GM12878 (cell line): ENCODE measurements at regions of chr6 and their contacts with region 1.

Region 1: GRCh38 chr6:170295510-170296422 is 4.9 kb upstream of the DLL1 start:
- DNase-seq: no peak
- ATAC-seq: peak; percentile 55
- H3K4me3 ChIP-seq: peak overlapping the region; percentile 57; the same call in 1 of the 2 replicates
- H3K27ac ChIP-seq: no peak overlapping the region
- H3K4me1 ChIP-seq: peaks cover 23% of the 10 kb centered on the region
- H3K27me3 ChIP-seq: peaks cover 14 to 33% of the 10 kb centered on the region in 2 experiments
- CTCF ChIP-seq: no peak
- EP300 ChIP-seq: no peak
- POLR2A ChIP-seq: no peak
- RAD21 ChIP-seq: no peak

Region 2: GRCh38 chr6:169831450-169832246 is 464.1 kb before region 1 on chr6:
- CTCF ChIA-PET with region 1: interaction called, 5 read pairs
- POLR2A ChIA-PET with region 1: no interaction called
- RAD21 ChIA-PET with region 1: interaction called, 11 read pairs
- SMC1A ChIA-PET with region 1: interaction called, 7 read pairs
- in situ Hi-C with region 1: no loop called
- intact Hi-C with region 1: loop called (anchors 10 kb)
- DNase-seq: no peak
- ATAC-seq: peak; percentile 95
- H3K4me3 ChIP-seq: no peak overlapping the region
- H3K27ac ChIP-seq: no peak overlapping the region
- H3K4me1 ChIP-seq: no peaks in the 10 kb centered on the region
- H3K27me3 ChIP-seq: no peaks in the 10 kb centered on the region
- CTCF ChIP-seq: peak; percentile 79 to 84 (median 80)
- EP300 ChIP-seq: no peak
- POLR2A ChIP-seq: no peak
- RAD21 ChIP-seq: peak; percentile 75

Region 3: DNA sequence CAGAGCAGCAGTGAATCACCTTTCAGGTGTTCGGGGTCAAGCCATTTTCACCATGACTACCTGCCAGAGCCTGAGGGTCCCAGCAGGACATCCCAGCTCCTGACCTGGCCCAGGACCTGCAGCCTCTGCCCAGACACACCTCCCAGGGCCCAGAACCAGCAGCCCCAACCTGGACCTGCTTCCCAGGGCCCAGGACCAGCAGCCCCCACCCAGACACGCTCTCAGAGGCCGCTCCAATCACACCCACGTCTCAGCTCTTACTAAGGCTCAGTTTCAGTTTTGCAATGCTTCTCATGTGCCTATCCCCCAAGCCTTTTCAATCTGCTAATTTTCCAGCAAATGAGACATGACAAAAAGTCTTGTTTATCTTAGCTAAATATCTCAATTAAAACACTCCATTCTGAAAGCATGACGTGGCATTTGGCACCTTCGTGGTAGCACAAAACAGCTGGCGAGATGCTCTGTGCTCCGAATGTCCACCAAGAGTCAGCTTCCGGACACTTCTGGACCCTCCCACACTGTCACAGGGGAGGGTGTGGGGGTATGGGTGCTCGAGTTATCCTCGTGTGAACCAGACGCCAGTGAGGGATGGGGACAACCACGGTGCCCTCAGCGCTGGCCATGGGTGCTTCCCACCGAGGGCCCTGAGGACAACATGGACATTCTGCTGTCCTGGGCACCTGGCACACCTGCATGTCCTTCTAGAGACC is 258.1 kb before region 1 on chr6:
- CTCF ChIA-PET with region 1: no interaction called
- POLR2A ChIA-PET with region 1: no interaction called
- RAD21 ChIA-PET with region 1: no interaction called
- SMC1A ChIA-PET with region 1: no interaction called
- in situ Hi-C with region 1: no loop called
- intact Hi-C with region 1: no loop called
- DNase-seq: no peak
- ATAC-seq: no peak
- H3K4me3 ChIP-seq: no peak overlapping the region
- H3K27ac ChIP-seq: no peak overlapping the region
- H3K4me1 ChIP-seq: no peaks in the 10 kb centered on the region
- H3K27me3 ChIP-seq: no peaks in the 10 kb centered on the region
- CTCF ChIP-seq: no peak
- EP300 ChIP-seq: no peak
- POLR2A ChIP-seq: no peak
- RAD21 ChIP-seq: no peak

Region 4: DNA sequence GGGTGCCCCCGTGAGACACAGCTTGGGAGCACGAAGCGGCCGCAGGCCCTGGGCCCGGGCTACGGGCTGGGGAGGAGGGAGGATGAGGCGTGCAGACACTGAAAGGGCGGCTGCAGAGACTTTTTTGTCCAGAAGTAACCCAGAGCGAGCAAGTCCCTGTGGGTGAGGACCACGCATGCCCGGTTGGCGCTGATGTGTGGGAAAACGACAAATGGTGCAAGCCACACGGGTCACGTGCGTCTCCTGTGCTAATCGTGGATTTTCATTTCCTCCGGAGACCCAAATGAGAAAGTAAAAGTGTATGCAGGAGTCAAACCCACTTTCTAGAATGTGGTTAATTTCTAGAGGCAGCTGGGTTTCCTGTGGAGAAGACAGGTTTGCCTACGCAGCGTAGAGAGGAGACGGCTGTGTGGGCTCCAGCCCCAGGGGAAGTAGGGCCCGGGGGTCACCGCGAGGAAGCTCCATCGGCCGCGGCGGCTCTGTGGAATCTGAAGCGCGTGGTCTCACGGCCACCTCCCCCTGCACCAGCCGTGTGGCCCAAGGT is 23.9 kb before region 1 on chr6:
- CTCF ChIA-PET with region 1: no interaction called
- POLR2A ChIA-PET with region 1: no interaction called
- RAD21 ChIA-PET with region 1: interaction called, 4 read pairs
- SMC1A ChIA-PET with region 1: interaction called, 5 read pairs
- in situ Hi-C with region 1: no loop called
- intact Hi-C with region 1: loop called (anchors 2 kb)
- DNase-seq: peak; percentile 91
- ATAC-seq: peak; percentile 95
- H3K4me3 ChIP-seq: peak overlapping the region; percentile 61
- H3K27ac ChIP-seq: peak overlapping the region; percentile 56
- H3K4me1 ChIP-seq: peaks cover 13% of the 10 kb centered on the region
- H3K27me3 ChIP-seq: no peaks in the 10 kb centered on the region; a peak in 1 of 4 replicates
- CTCF ChIP-seq: no peak
- EP300 ChIP-seq: peak in 1 of 2 experiments; percentile 53; a peak in 1 of 4 replicates
- POLR2A ChIP-seq: peak; percentile 63
- RAD21 ChIP-seq: no peak